Right ventricle myocardium superior (tissue), 1 donor: ENCODE measurements at regions of chr11 and their contacts with region 1.

Region 1: DNA sequence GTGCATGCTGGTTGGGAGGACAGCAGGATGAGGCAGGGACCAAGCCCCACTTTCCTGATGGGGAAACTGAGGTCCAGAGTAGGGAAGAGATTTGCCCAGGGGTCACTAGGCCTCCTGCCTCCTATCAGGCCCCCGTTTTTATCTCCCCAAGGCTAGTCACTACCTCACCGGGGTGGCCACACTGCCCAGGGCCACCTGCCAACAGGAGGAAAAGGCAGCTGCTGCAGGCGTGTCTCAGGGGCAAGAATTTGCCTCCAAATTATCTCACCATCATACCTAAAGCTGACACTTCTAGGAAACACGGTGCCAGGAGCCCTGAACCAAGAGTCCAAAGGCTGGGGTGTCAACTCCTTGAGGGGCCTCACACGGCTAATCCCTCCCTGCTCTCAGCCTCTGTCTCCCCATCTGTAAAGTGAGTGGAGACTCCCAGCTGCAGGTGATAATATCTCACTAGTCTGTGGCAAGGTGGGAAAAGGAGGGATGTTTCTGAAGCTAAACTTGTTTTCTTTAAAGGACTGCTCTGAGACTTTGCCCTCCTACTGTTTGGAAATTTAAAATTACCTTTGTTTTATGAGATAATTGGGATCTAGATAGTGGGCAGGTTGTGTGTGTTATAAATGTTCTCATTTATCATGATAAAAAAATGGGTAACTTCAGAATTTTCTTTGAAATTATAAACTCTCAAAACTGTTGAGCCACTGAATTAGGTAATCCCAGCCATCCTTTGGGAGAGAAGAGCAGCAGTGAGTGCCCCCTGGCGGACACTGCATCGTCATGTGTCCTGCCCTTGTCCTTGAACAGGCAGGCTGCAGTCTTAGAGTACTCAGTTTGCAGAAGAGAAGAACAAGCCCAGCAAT is 60.0 kb downstream of the MYO7A start:
- DNase-seq: peak; percentile 92
- ATAC-seq: peak; percentile 94

Region 2: GRCh38 chr11:77127232-77127911 is 60.6 kb before region 1 on chr11:
- intact Hi-C with region 1: loop called (anchors 2 kb)
- DNase-seq: peak; percentile 73
- ATAC-seq: peak; percentile 81

Region 3: GRCh38 chr11:77259641-77260040 is 71.6 kb after region 1 on chr11:
- intact Hi-C with region 1: no loop called
- DNase-seq: no peak
- ATAC-seq: no peak

Region 4: DNA sequence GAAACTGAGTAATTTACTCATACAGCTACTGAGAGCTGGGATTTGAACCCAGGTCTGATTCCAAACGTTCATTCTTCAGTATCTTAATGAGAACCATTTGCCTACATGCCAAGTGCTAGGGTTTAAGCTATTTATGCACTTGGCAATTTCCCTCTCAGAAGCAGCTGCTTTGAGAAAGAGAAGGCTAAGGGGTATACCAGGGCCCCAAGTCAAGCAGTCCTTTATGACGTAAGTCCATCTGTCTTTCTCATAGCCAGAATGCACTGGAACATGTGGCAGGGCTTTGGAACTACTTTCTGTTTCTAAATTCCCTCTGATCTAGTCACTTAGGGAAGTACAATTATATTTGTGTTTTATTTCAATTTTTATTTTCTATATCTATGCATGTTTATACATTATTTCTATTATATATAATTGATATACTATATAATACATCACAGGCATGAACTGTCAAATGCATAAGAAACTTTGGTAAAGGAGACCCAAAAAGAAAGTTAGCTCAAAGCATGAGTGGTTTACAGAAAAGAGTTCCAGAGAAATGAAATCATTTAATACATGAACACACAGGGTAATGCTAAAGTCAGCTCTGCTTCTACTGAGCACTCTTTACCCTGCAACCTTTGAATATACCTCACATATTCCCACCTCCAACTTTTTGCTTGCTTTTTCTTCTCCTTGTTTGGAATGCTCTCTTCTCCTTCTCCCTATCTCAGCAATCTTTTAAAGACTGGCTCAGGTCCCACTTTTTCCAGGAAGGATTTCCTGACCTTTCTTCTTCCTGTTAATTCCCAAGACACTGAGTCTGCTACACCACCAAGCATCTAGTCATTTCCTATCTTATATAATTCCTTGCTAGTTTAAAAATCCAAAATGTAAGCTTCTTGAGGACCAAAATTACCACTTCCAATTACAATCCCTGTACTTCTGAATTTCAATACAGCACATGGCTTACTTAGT is 194.0 kb after region 1 on chr11:
- intact Hi-C with region 1: no loop called
- DNase-seq: no peak
- ATAC-seq: peak; percentile 39